Activated B cell treated with CpG ODN at 0.5 μM for 24 hours (primary cell): ENCODE measurements at regions of chr6 and their contacts with region 1.

Region 1: DNA sequence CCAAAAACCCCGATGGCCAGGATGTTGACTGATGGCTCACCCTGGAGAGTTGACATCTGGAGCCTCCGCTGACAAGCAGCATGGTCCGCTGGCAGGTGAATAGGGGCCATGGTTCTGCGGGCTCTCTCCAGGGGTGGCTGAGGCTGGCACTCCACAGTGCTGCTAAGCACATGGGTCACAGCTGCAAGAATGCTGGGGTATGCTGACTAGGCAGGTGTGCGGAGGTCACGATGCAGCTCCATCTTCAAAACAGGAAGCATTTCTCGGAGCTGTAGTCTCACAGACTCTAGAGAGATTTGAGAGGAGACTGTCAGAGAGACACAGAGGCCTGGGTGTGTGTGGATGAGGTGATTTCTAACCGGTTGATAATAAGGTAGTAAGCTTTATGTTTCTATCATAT is 341.6 kb downstream of the NRN1 start:
- DNase-seq: peak; percentile 25
- ATAC-seq: peak; percentile 95
- H3K4me3 Mint-ChIP-seq: peak overlapping the region; percentile 52
- H3K27ac Mint-ChIP-seq: peak overlapping the region; percentile 74
- H3K4me1 Mint-ChIP-seq: peaks cover 57% of the 10 kb centered on the region
- H3K27me3 Mint-ChIP-seq: no peaks in the 10 kb centered on the region
- CTCF ChIP-seq: no peak

Region 2: GRCh38 chr6:4775584-4776494 is 889.3 kb before region 1 on chr6 and contains the start of gene CDYL:
- CTCF ChIA-PET with region 1: no interaction called
- POLR2A ChIA-PET with region 1: no interaction called
- intact Hi-C with region 1: no loop called
- DNase-seq: peak; percentile 96
- ATAC-seq: peak; percentile 77
- H3K4me3 Mint-ChIP-seq: peak within 1 kb of the TSS; percentile 90
- H3K27ac Mint-ChIP-seq: peak within 1 kb of the TSS; percentile 85
- H3K4me1 Mint-ChIP-seq: peaks cover 46% of the 10 kb centered on the region
- H3K27me3 Mint-ChIP-seq: no peaks in the 10 kb centered on the region
- CTCF ChIP-seq: no peak
- total RNA-seq, gene CDYL: 47.5 and 49.8 TPM in 2 replicates

Region 3: DNA sequence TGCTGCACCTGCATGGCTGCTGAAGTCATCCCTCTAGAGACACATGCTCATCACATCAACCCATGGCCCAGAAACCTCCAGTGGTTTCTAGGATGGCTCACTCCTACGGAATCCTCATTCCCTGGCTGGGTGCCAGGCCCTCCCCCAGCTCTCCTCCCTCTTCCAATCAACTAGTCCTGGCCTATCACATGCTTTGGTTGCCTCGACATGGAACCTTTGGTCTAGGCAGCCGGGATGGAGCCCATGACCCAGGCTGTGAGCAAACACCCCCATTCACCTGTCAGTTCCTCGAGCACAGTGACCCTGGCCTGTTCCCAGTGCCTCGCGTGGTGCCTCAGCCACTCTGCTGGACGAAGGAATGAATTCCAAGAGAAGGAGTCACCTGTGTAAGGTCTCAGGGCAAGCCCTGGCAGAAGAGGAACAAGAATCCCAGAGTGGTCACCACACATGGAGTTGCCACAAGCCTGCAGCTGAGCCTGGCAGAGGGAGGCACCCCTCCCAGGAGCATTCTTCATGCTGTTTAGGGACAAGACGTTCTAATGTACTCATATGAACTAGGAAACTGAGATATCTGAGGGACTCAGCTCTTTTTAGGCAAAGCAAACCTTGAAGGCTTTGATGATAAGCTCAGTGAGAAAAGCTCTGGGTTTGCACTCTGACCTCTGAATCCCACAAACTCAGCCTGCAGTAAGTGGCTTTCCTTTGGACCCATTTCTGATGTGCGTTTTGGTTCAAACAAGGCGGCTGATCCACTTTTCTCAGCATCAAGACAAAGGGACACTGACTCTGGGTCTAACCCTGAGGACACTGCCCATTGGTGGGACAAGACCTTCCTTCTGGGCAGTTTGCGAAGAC is 539.8 kb before region 1 on chr6:
- CTCF ChIA-PET with region 1: no interaction called
- POLR2A ChIA-PET with region 1: no interaction called
- intact Hi-C with region 1: no loop called
- DNase-seq: no peak
- ATAC-seq: no peak
- H3K4me3 Mint-ChIP-seq: no peak overlapping the region
- H3K27ac Mint-ChIP-seq: no peak overlapping the region
- H3K4me1 Mint-ChIP-seq: peaks cover 10% of the 10 kb centered on the region
- H3K27me3 Mint-ChIP-seq: no peaks in the 10 kb centered on the region
- CTCF ChIP-seq: no peak

Region 4: GRCh38 chr6:5302995-5303622 is 362.1 kb before region 1 on chr6:
- CTCF ChIA-PET with region 1: no interaction called
- POLR2A ChIA-PET with region 1: no interaction called
- intact Hi-C with region 1: no loop called
- DNase-seq: peak; percentile 40
- ATAC-seq: peak; percentile 70
- H3K4me3 Mint-ChIP-seq: peak overlapping the region; percentile 77
- H3K27ac Mint-ChIP-seq: peak overlapping the region; percentile 84
- H3K4me1 Mint-ChIP-seq: peaks cover 40% of the 10 kb centered on the region
- H3K27me3 Mint-ChIP-seq: no peaks in the 10 kb centered on the region
- CTCF ChIP-seq: no peak

Region 5: GRCh38 chr6:5680095-5680494 is 14.9 kb after region 1 on chr6:
- CTCF ChIA-PET with region 1: no interaction called
- POLR2A ChIA-PET with region 1: no interaction called
- intact Hi-C with region 1: loop called (anchors 2 kb)
- DNase-seq: no peak
- ATAC-seq: peak; percentile 37
- H3K4me3 Mint-ChIP-seq: peak overlapping the region; percentile 68
- H3K27ac Mint-ChIP-seq: peak overlapping the region; percentile 80
- H3K4me1 Mint-ChIP-seq: peaks cover 39% of the 10 kb centered on the region
- H3K27me3 Mint-ChIP-seq: no peaks in the 10 kb centered on the region
- CTCF ChIP-seq: no peak